ENCODE measurements at regions of chr17 and their contacts with region 1.

Region 1: DNA sequence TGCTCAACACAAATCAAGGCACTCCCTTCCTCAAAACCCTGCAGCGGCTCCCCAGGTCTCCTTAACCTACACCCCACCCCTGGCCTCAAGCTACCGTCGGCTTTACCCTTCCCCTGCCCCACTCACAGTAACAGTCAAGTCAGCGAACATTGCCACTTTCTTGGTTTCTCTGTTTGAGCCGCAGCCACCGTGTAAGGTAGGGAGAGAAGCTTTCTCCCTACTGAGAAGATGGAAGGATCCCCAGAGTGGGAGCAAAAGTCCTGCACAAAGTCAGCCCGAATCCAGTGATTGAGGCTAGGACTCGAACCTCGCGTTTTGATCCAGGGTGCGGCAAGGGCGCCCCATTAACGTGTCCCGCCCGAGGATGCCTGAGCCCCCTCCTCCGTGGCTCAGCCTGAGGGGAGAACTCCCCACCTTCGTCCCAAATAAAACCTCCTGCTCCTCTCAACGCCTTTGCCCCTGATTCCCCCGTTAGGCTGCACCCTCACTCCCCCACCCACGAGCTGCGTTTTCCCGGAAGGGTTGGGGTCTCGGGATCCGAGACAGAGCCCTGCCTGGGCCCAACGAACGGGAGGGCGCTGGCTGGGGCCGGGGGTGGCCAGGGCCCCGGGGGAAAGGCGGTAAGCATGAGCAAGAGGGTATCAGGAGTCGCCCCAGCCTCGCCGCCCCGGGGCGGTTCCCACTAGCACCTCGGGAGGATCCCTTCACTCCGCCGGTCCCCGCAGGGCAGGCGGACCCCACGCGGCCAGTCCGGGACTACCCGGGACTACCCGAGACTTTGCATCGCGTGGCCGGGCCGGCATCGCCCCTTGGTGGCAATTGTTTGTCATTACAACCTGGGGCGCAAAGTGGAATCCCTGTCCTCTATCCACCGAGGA is 9.9 kb upstream of the NAGS start:
- DNase-seq: peak; percentile 54
- H3K4me3 Mint-ChIP-seq: no peak overlapping the region
- H3K27ac Mint-ChIP-seq: no peak overlapping the region
- H3K4me1 Mint-ChIP-seq: no peaks in the 10 kb centered on the region
- H3K27me3 Mint-ChIP-seq: peaks cover 18% of the 10 kb centered on the region

Region 2: DNA sequence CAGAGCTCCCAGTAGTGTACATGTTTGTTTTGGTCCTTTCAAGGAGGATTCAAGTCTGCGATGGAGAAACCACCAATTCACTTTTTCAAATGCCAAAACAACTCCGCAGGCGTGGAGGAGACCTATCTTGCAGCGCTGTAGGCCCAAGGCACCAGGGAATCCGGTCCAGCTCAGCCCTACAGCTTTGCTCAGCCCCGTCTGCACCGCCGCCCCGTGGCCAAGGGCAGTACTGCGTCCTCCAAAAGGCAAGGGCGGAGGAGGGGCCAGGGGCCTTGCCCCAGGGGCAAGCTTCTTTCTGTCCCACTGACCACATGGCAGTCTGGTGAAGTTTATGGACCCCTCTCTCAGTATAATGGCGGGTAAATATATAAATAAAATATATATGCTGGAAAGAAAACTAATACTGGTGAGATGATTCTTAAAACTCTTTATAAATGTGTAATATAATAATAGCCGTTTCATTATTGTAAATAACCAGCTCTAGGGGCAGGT is 148.2 kb before region 1 on chr17:
- intact Hi-C with region 1: no loop called
- DNase-seq: peak; percentile 62
- H3K4me3 Mint-ChIP-seq: no peak overlapping the region
- H3K27ac Mint-ChIP-seq: no peak overlapping the region
- H3K4me1 Mint-ChIP-seq: peaks cover 2% of the 10 kb centered on the region
- H3K27me3 Mint-ChIP-seq: peaks cover 10% of the 10 kb centered on the region

Region 3: GRCh38 chr17:43911904-43912303 is 82.6 kb before region 1 on chr17:
- intact Hi-C with region 1: loop called (anchors 2 kb)
- DNase-seq: no peak
- H3K4me3 Mint-ChIP-seq: no peak overlapping the region
- H3K27ac Mint-ChIP-seq: no peak overlapping the region
- H3K4me1 Mint-ChIP-seq: peaks cover 4% of the 10 kb centered on the region
- H3K27me3 Mint-ChIP-seq: peaks cover 22% of the 10 kb centered on the region

Measured in activated T-helper 2 cell treated with anti-CD3 and anti-CD28 coated beads, Interferon-gamma antibody, Interleukin-2, Interleukin-4, amounts not matched to agents 10 μg/mL and 5 μg/mL and 100 μg/mL, durations not matched to agents 14 hours and 24 hours and 36 hours (primary cell).